ENCODE measurements at regions of chr12 and their contacts with region 1.

Region 1: DNA sequence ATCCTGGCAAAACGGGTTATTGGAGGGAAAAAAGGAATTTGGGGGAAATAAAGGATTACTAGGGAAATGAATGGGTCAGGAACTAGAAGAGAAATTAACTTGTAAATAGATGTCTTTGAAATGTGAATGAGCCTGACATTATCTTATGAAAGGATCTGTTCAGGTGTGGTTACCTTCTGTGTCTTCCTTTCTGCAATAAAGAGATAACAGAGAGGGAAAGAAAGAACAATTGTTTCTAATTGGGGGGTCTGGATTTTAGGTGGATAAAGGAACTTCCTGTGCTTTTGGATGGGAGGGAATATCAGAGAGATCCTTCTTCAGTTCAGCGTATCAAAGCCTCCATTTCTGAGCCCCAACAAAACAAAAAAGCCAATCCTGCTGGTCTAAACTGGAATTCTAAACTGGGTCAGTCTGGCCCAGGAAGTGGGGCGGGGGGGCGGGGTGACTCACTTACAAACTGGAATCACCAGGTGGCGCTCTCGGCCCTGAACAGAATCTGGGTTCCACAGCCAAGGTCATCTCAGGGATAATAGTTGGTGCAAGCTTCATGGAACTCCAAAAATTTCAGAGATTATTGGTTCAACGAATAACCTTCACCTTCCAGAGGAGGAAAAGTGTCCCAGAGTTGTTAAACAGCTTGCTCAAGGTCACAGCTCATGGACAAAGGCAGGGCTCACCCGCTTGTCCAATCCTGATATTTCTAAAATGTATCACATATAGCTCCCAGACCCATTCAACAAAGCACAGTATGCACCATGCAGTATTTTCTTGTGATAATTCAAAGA is 15.2 kb upstream of the PEBP1 start:
- DNase-seq: peak; percentile 53 to 82 (median 66)
- H3K4me3 ChIP-seq: peak overlapping the region in 1 of 59 donors; percentile 9
- H3K27ac ChIP-seq: peak overlapping the region in 52 of 59 donors; percentile 1 to 89 (median 66)
- H3K27me3 ChIP-seq: no peaks in the 10 kb centered on the region
- CTCF ChIP-seq: peak; percentile 61 to 94 (median 82)

Region 2: DNA sequence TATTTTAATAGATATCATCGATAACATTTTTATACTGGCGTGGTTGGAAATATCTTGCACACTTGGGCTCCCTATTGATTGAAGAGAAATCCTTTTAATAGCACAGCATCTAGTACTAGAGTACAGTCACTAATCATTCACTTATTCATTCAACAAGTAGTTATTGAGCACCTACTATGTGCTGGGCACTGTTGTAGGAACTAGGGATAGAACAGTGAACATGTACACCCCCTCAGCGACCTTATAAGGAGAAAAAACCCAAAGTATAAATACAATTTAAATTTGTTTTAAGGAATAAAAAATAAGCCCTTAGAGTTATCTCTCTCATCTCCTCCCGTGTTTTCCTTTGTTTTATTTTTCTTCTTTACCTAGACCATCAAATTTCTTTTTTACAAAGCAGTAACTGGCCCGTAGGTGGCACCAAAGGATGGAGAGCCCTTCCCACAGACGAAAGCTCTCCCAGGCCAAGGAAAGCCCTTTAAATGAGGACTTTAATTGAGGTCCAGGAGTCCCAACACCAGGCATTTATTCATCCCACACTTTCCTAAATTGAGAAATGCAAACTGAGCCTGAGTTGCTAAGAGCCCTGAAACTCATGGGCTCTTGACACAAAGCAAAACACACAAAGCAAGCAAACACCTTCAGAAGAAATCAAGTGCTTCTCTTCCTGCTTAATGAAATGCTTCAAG is 44.2 kb after region 1 on chr12:
- intact Hi-C with region 1: loop called in 1 of 2 experiments (anchors 5 kb)
- DNase-seq: peak in 2 of 10 donors; percentile 25 to 53
- H3K4me3 ChIP-seq: no peak overlapping the region
- H3K27ac ChIP-seq: peak overlapping the region in 14 of 59 donors; percentile 8 to 71 (median 22)
- H3K27me3 ChIP-seq: no peaks in the 10 kb centered on the region
- CTCF ChIP-seq: peak in 53 of 56 donors; percentile 28 to 73 (median 53)

Region 3: GRCh38 chr12:118183705-118184104 is 62.9 kb after region 1 on chr12:
- intact Hi-C with region 1: loop called in 1 of 2 experiments (anchors 5 kb)
- DNase-seq: no peak
- H3K4me3 ChIP-seq: no peak overlapping the region
- H3K27ac ChIP-seq: peak overlapping the region in 34 of 59 donors; percentile 17 to 76 (median 50)
- H3K27me3 ChIP-seq: no peaks in the 10 kb centered on the region
- CTCF ChIP-seq: no peak